ENCODE measurements at regions of chr2 and their contacts with region 1.

Region 1: GRCh38 chr2:106193977-106194778 is at the start of gene UXS1:
- DNase-seq: peak; percentile 96 to 99 (median 98)
- ATAC-seq: peak; percentile 81
- H3K4me3 ChIP-seq: peak within 1 kb of the TSS; percentile 81
- H3K4me3 Mint-ChIP-seq: peak within 1 kb of the TSS; percentile 98
- H3K27ac ChIP-seq: peak within 1 kb of the TSS; percentile 58 to 79
- H3K27ac Mint-ChIP-seq: peak within 1 kb of the TSS; percentile 98
- H3K4me1 ChIP-seq: peaks cover 44% of the 10 kb centered on the region
- H3K4me1 Mint-ChIP-seq: peaks cover 48% of the 10 kb centered on the region
- H3K27me3 ChIP-seq: no peaks in the 10 kb centered on the region
- H3K27me3 Mint-ChIP-seq: no peaks in the 10 kb centered on the region
- CTCF ChIP-seq: no peak
- total RNA-seq, gene UXS1: 59.3 to 67.1 TPM

Region 2: GRCh38 chr2:105329561-105330495 is 864.4 kb before region 1 on chr2 and contains the start of gene TGFBRAP1:
- CTCF ChIA-PET with region 1: no interaction called
- POLR2A ChIA-PET with region 1: no interaction called
- intact Hi-C with region 1: loop called in 1 of 2 experiments (anchors 10 kb)
- DNase-seq: peak; percentile 13 to 85 (median 50)
- ATAC-seq: peak; percentile 86
- H3K4me3 ChIP-seq: peak within 1 kb of the TSS; percentile 73
- H3K4me3 Mint-ChIP-seq: peak within 1 kb of the TSS; percentile 91
- H3K27ac ChIP-seq: peak within 1 kb of the TSS; percentile 83 to 87
- H3K27ac Mint-ChIP-seq: peak within 1 kb of the TSS; percentile 94
- H3K4me1 ChIP-seq: peaks cover 29% of the 10 kb centered on the region
- H3K4me1 Mint-ChIP-seq: peaks cover 45% of the 10 kb centered on the region
- H3K27me3 ChIP-seq: no peaks in the 10 kb centered on the region
- H3K27me3 Mint-ChIP-seq: no peaks in the 10 kb centered on the region
- CTCF ChIP-seq: no peak
- total RNA-seq, gene TGFBRAP1: 14.9 to 16.6 TPM

Region 3: GRCh38 chr2:106104332-106105062 is 89.7 kb before region 1 on chr2:
- CTCF ChIA-PET with region 1: interaction called, 4 read pairs
- POLR2A ChIA-PET with region 1: no interaction called
- intact Hi-C with region 1: loop called in 1 of 2 experiments (anchors 5 kb)
- DNase-seq: peak; percentile 40 to 85 (median 58)
- ATAC-seq: peak; percentile 80
- H3K4me3 ChIP-seq: no peak overlapping the region
- H3K4me3 Mint-ChIP-seq: no peak overlapping the region
- H3K27ac ChIP-seq: no peak overlapping the region
- H3K27ac Mint-ChIP-seq: peak overlapping the region; percentile 55
- H3K4me1 ChIP-seq: no peaks in the 10 kb centered on the region
- H3K4me1 Mint-ChIP-seq: peaks cover 9% of the 10 kb centered on the region
- H3K27me3 ChIP-seq: no peaks in the 10 kb centered on the region
- H3K27me3 Mint-ChIP-seq: no peaks in the 10 kb centered on the region
- CTCF ChIP-seq: peak; percentile 97

Region 4: GRCh38 chr2:106137731-106138521 is 56.3 kb before region 1 on chr2:
- CTCF ChIA-PET with region 1: interaction called, 3 read pairs
- POLR2A ChIA-PET with region 1: interaction called, 3 read pairs
- intact Hi-C with region 1: loop called (anchors 5 to 10 kb)
- DNase-seq: peak in 7 of 14 experiments; percentile 17 to 75 (median 52)
- ATAC-seq: peak; percentile 76
- H3K4me3 ChIP-seq: peak overlapping the region; percentile 43
- H3K4me3 Mint-ChIP-seq: peak overlapping the region; percentile 82
- H3K27ac ChIP-seq: peak overlapping the region; percentile 66 to 84
- H3K27ac Mint-ChIP-seq: peak overlapping the region; percentile 91
- H3K4me1 ChIP-seq: peaks cover 51% of the 10 kb centered on the region
- H3K4me1 Mint-ChIP-seq: peaks cover 46% of the 10 kb centered on the region
- H3K27me3 ChIP-seq: no peaks in the 10 kb centered on the region
- H3K27me3 Mint-ChIP-seq: no peaks in the 10 kb centered on the region
- CTCF ChIP-seq: no peak

Region 5: GRCh38 chr2:106147159-106147558 is 47.0 kb before region 1 on chr2:
- CTCF ChIA-PET with region 1: interaction called, 3 read pairs
- POLR2A ChIA-PET with region 1: interaction called, 3 read pairs
- intact Hi-C with region 1: loop called in 1 of 2 experiments (anchors 10 kb)
- DNase-seq: no peak
- ATAC-seq: no peak
- H3K4me3 ChIP-seq: no peak overlapping the region
- H3K4me3 Mint-ChIP-seq: no peak overlapping the region
- H3K27ac ChIP-seq: peak overlapping the region in 1 of 2 donors; percentile 68
- H3K27ac Mint-ChIP-seq: peak overlapping the region; percentile 85
- H3K4me1 ChIP-seq: peaks cover 48% of the 10 kb centered on the region
- H3K4me1 Mint-ChIP-seq: peaks cover 70% of the 10 kb centered on the region
- H3K27me3 ChIP-seq: no peaks in the 10 kb centered on the region
- H3K27me3 Mint-ChIP-seq: no peaks in the 10 kb centered on the region
- CTCF ChIP-seq: no peak

Region 6: DNA sequence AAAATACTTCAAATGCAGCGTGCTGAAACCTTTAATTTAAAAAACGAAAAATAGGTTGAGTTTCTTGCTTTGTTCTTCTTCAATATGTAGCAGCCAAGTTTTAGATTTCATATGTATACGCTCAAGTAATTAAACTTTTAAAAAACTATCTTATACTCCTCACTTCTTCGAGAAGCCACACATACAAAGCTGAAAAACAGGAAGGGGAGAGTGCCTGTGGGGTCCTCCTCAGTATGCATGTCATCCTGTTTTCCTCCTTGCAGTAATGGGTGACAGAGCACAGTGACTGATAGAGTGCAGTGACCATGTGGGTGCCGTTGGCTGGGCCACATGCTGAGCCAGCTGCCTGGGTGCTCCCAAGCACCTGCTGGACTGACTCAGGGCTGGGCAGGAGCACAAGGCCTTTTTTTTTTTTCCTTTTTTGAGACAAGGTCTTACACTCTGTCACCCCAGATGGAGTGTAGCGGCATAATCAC is 33.4 kb before region 1 on chr2:
- CTCF ChIA-PET with region 1: interaction called, 6 read pairs
- POLR2A ChIA-PET with region 1: interaction called, 59 read pairs
- intact Hi-C with region 1: loop called (anchors 1 to 2 kb)
- DNase-seq: peak in 13 of 14 experiments; percentile 22 to 74 (median 50)
- ATAC-seq: peak; percentile 56
- H3K4me3 ChIP-seq: peak overlapping the region; percentile 67
- H3K4me3 Mint-ChIP-seq: peak overlapping the region; percentile 89
- H3K27ac ChIP-seq: peak overlapping the region; percentile 83 to 87
- H3K27ac Mint-ChIP-seq: peak overlapping the region; percentile 95
- H3K4me1 ChIP-seq: peaks cover 66% of the 10 kb centered on the region
- H3K4me1 Mint-ChIP-seq: peaks cover 99% of the 10 kb centered on the region
- H3K27me3 ChIP-seq: no peaks in the 10 kb centered on the region
- H3K27me3 Mint-ChIP-seq: no peaks in the 10 kb centered on the region
- CTCF ChIP-seq: no peak

Region 7: DNA sequence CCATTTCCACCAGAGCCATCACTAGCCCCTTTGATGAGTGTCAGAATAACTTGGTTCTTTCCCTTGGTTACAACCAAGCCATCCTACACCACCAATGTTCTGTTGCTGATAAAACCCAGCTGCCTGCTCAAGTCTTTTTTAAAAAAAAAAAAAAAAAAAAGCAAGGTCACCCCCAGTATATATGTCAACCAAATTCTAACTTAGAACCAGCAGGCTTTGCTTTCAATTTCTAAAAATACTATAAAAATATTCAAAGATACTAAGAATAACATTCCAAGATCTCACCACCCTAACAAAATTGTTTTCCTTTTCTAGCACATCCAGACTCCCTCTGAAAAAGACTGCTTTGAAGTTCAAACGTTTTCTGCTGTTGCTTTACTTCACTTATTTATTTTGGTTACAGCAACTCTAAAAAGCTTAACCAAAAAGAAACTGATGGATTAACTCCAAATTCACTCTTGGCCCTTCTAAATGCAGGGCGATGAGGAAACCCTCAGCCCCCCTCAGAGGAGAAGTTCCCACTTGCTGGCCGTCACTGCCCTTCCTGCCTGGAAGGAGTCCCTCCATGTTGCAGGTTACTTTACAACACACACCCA is 11.0 kb before region 1 on chr2:
- CTCF ChIA-PET with region 1: interaction called, 4 read pairs
- POLR2A ChIA-PET with region 1: interaction called, 10 read pairs
- intact Hi-C with region 1: no loop called
- DNase-seq: no peak
- ATAC-seq: no peak
- H3K4me3 ChIP-seq: no peak overlapping the region
- H3K4me3 Mint-ChIP-seq: no peak overlapping the region
- H3K27ac ChIP-seq: no peak overlapping the region
- H3K27ac Mint-ChIP-seq: no peak overlapping the region
- H3K4me1 ChIP-seq: peaks cover 34% of the 10 kb centered on the region
- H3K4me1 Mint-ChIP-seq: peaks cover 84% of the 10 kb centered on the region
- H3K27me3 ChIP-seq: no peaks in the 10 kb centered on the region
- H3K27me3 Mint-ChIP-seq: no peaks in the 10 kb centered on the region
- CTCF ChIP-seq: no peak

Measured in CD4-positive, alpha-beta T cell (primary cell).